Activated T-helper 1 cell treated with anti-CD3 and anti-CD28 coated beads, Interleukin-12 subunit alpha, Interleukin-12 subunit beta, Interleukin-2, Interleukin-4 antibody, amounts not matched to agents 30 ng/mL and 10 ng/mL and 1 ng/mL, durations not matched to agents 14 hours and 24 hours and 36 hours (primary cell): ENCODE measurements at regions of chr17 and their contacts with region 1.

Region 1: DNA sequence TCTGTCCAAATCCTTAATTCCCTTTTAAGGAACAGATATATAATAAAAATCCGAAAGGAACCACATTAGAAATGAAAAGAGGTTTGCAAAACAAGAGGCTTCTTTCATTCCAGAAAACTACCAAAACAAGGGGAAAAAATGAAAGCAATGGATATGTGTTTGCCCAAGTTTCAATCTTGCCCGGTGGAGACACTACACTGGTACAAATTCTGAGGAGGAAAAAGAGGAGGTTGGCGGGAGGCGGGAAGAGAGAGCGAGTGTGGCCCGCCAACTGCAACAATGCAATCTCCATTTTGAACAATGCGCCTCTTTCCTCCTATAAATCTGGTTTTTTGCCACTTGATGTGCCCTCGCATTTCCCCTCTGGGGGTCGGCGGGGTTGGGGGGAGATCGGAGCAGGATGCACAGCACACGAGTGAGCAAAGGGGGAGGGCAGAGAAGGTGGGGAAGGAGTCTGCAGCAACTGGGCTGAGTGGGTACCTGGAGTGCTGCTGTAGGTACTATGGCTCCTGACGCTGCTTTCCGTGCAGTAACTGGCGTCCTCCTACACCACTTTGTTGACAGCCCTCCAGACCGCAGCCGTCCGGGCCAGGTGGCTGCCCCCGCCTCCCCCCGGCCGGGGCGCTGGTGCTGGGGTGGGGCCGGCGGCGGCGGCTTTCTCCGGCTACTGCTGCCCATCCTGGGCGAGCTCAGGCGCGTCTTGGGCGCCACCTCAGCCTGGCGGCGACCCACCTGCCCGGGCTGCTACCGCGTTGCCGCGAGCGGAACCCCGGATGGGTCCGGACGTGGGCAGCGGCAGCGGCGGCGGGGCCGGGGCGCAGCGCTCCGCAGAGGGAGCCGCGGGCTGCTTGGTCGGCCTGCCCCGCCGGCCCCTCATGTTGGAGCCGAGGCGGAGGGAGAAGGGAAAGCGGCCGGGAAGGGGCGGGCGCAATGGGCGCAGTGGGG is 93.8 kb upstream of the PLEKHM1 start:
- DNase-seq: peak; percentile 73
- H3K4me3 Mint-ChIP-seq: peak overlapping the region; percentile 89
- H3K27ac Mint-ChIP-seq: peak overlapping the region; percentile 94
- H3K4me1 Mint-ChIP-seq: peaks cover 44% of the 10 kb centered on the region
- H3K27me3 Mint-ChIP-seq: peaks cover 2% of the 10 kb centered on the region

Region 2: DNA sequence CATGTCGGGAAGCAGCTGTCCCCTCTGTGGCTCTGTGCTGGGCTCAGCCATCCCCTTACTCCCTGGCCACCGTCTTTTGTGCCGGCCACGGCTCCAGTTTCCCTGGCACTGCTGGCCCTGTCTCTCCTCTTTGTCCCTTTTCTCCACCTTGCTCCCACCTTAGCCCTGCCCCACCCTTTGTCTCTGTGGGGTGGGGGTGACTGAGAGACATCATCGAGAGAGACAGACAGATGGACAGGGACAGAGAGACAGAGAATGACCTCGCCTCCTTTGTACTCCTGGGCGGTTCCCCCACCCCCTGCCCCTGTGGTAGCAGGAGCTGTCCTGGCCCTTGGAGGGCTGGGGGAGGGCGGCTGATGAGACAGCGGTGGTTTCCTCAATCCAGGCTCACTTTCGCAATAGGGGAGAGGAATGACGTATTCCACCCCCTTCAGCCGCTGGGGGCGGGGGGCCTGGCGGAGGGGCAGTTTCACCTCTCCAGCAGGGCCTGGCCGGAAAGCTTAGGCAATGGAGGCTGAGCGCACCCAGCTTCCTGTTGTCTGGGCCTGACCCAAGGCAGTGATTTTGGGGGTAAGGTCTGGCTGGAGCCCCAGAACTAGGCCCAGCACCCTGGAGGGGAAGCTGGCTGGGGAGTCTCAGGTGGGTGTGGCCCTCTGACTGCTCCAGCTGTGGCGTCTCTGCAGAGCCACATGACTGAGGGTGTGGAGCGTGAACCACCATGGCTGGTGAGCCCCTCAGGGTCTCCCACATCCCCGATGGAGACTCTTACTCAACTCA is 355.4 kb before region 1 on chr17:
- intact Hi-C with region 1: loop called (anchors 10 kb)
- DNase-seq: peak; percentile 81
- H3K4me3 Mint-ChIP-seq: peak overlapping the region; percentile 99
- H3K27ac Mint-ChIP-seq: peak overlapping the region; percentile 97
- H3K4me1 Mint-ChIP-seq: peaks cover 94% of the 10 kb centered on the region
- H3K27me3 Mint-ChIP-seq: no peaks in the 10 kb centered on the region

Region 3: GRCh38 chr17:45438931-45439610 is 145.3 kb before region 1 on chr17:
- intact Hi-C with region 1: no loop called
- DNase-seq: no peak
- H3K4me3 Mint-ChIP-seq: no peak overlapping the region
- H3K27ac Mint-ChIP-seq: no peak overlapping the region
- H3K4me1 Mint-ChIP-seq: peaks cover 14% of the 10 kb centered on the region
- H3K27me3 Mint-ChIP-seq: no peaks in the 10 kb centered on the region

Region 4: GRCh38 chr17:46002311-46002972 is 418.1 kb after region 1 on chr17:
- intact Hi-C with region 1: loop called (anchors 10 kb)
- DNase-seq: peak; percentile 63
- H3K4me3 Mint-ChIP-seq: no peak overlapping the region
- H3K27ac Mint-ChIP-seq: no peak overlapping the region
- H3K4me1 Mint-ChIP-seq: peaks cover 8% of the 10 kb centered on the region
- H3K27me3 Mint-ChIP-seq: peaks cover 6% of the 10 kb centered on the region

Region 5: GRCh38 chr17:46139432-46140210 is 555.3 kb after region 1 on chr17:
- intact Hi-C with region 1: loop called (anchors 10 kb)
- DNase-seq: no peak
- H3K4me3 Mint-ChIP-seq: no peak overlapping the region
- H3K27ac Mint-ChIP-seq: no peak overlapping the region
- H3K4me1 Mint-ChIP-seq: peaks cover 91% of the 10 kb centered on the region
- H3K27me3 Mint-ChIP-seq: no peaks in the 10 kb centered on the region

Region 6: GRCh38 chr17:46922804-46923635 is 1338.7 kb after region 1 on chr17 and contains the start of gene GOSR2:
- intact Hi-C with region 1: loop called (anchors 10 kb)
- DNase-seq: peak; percentile 86
- H3K4me3 Mint-ChIP-seq: peak within 1 kb of the TSS; percentile 87
- H3K27ac Mint-ChIP-seq: peak within 1 kb of the TSS; percentile 100
- H3K4me1 Mint-ChIP-seq: peaks cover 43% of the 10 kb centered on the region
- H3K27me3 Mint-ChIP-seq: peaks cover 4% of the 10 kb centered on the region
- total RNA-seq, gene GOSR2: 59.4 and 62.7 TPM in 2 replicates